Activated naive CD4-positive, alpha-beta T cell treated with anti-CD3 and anti-CD28 coated beads, Interleukin-2, amount 10 ng/mL, durations not matched to agents 7 days and 5 days (primary cell): ENCODE measurements at regions of chr1 and their contacts with region 1.

Region 1: DNA sequence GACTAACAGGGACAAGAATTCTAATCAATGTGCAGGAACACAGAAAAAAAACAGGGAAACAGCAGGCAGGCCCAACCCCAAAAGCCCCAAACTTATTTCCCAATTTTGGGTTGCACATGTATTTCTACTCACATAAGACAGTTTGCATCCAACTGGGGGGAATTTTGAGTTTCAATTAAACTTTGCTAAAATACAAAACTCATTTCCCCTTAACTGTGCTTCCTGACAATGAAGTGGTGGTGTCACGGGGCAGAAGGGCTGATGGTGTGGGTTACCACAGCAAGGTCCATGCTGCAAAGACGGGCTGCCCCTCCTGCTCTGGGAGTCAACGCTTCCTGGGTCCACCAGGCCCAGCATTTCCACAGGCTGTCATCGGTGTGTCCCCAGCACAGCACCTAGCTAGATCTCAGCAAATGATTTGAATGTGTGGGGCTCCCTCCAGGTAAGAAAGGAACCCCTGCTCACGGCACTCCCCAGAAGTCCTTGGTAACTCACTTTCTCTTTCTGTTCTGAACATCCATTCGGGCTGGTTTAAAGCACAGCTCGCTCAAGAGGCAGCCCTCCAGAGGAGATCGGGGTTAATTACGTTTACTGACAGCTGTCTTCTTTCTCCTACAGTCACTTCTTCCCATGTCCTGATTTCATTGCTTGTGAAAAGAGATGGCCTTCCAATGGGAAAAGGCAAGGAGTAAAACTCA is 27.4 kb downstream of the HIVEP3 start:
- DNase-seq: peak; percentile 79
- H3K4me3 Mint-ChIP-seq: peak overlapping the region; percentile 73
- H3K27ac Mint-ChIP-seq: peak overlapping the region; percentile 93
- H3K4me1 Mint-ChIP-seq: peaks cover 70% of the 10 kb centered on the region
- H3K27me3 Mint-ChIP-seq: no peaks in the 10 kb centered on the region

Region 2: DNA sequence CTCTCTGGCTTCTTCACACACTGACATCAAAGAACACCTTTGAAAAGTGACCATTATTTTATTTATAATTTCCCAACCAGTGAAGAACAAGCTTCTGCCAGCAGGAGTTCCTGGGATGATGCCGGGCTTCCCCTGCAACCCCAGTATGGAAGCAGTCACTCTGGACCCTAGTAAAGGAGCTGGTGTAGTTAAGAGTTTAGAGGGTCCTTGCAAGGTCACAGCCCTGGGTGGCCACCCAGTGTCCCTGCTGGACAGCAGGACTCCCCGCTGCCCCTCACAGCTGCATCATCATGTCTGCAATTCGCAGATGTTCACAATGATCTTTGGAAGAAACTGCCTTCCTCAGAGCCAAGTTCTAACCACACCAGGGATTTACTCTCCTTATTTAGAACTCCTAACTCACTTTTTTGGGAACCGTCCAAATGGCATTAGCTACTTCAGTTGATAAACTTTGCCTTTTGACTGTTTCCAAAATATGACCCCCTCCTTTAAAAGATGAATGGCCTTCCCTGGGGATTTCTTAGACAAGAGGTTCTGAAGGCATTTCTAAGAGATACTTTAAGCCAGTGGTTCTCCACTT is 63.3 kb before region 1 on chr1:
- CTCF ChIA-PET with region 1: no interaction called
- DNase-seq: no peak
- H3K4me3 Mint-ChIP-seq: no peak overlapping the region
- H3K27ac Mint-ChIP-seq: no peak overlapping the region
- H3K4me1 Mint-ChIP-seq: peaks cover 3% of the 10 kb centered on the region
- H3K27me3 Mint-ChIP-seq: peaks cover 8% of the 10 kb centered on the region

Region 3: GRCh38 chr1:41842993-41843755 is 48.2 kb before region 1 on chr1:
- CTCF ChIA-PET with region 1: no interaction called
- DNase-seq: no peak
- H3K4me3 Mint-ChIP-seq: no peak overlapping the region
- H3K27ac Mint-ChIP-seq: no peak overlapping the region
- H3K4me1 Mint-ChIP-seq: peaks cover 8% of the 10 kb centered on the region
- H3K27me3 Mint-ChIP-seq: peaks cover under 1% of the 10 kb centered on the region

Region 4: GRCh38 chr1:41862384-41863174 is 28.8 kb before region 1 on chr1:
- CTCF ChIA-PET with region 1: interaction called, 11 read pairs
- DNase-seq: peak; percentile 49
- H3K4me3 Mint-ChIP-seq: no peak overlapping the region
- H3K27ac Mint-ChIP-seq: peak overlapping the region; percentile 58
- H3K4me1 Mint-ChIP-seq: peaks cover 32% of the 10 kb centered on the region
- H3K27me3 Mint-ChIP-seq: peaks cover 4% of the 10 kb centered on the region

Region 5: DNA sequence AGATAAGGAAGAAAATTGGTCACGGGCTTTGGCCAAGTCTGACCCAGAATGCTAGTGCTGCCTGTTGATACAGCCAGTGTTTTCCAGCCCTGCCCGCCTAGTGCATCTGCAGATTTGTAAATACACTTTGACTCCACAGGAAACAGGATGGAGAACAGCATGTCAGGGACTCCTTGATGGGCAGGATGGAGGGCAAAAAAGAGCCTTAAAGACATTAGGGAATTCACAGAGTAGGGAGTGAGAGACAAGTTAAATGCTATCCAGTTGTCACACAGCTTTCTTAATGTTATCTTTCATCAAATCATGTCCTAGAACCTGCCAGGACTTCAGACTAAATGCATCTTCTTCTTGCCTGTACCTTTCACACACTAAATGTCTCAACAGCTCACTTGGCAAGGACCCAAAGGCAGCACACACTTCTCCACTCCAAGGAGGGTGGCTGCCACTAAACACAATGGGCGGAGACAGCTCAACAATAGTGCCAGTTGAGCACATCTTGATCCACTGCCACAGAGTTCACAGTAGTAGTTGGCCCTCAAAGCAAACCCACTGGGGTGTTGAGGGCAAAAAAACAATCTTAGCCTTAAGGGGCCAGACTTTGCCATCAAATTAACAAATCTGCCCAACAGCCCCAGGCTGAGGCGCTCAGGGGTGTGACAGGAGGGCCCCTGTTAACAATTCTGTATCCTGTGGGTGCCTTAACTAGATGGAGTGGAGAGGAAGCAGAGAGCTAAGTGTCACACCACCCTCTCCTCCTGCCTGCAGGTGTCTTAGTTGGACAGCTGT is 24.6 kb after region 1 on chr1:
- CTCF ChIA-PET with region 1: interaction called, 13 read pairs
- DNase-seq: peak; percentile 50
- H3K4me3 Mint-ChIP-seq: peak overlapping the region; percentile 87
- H3K27ac Mint-ChIP-seq: peak overlapping the region; percentile 92
- H3K4me1 Mint-ChIP-seq: peaks cover 89% of the 10 kb centered on the region
- H3K27me3 Mint-ChIP-seq: no peaks in the 10 kb centered on the region